Activated CD4-positive, alpha-beta memory T cell treated with anti-CD3 and anti-CD28 coated beads for 36 hours (primary cell): ENCODE measurements at regions of chr3 and their contacts with region 1.

Region 1: GRCh38 chr3:141875374-141875892 is 1.0 kb upstream of the ATP1B3 start:
- DNase-seq: peak; percentile 91
- H3K4me3 Mint-ChIP-seq: peak overlapping the region; percentile 88
- H3K27ac Mint-ChIP-seq: peak overlapping the region; percentile 92
- H3K4me1 Mint-ChIP-seq: peaks cover 32% of the 10 kb centered on the region
- H3K27me3 Mint-ChIP-seq: no peaks in the 10 kb centered on the region

Region 2: GRCh38 chr3:141303481-141304223 is 571.8 kb before region 1 on chr3:
- CTCF ChIA-PET with region 1: no interaction called
- POLR2A ChIA-PET with region 1: no interaction called
- intact Hi-C with region 1: loop called (anchors 10 kb)
- DNase-seq: peak; percentile 56
- H3K4me3 Mint-ChIP-seq: no peak overlapping the region
- H3K27ac Mint-ChIP-seq: no peak overlapping the region
- H3K4me1 Mint-ChIP-seq: peaks cover 44% of the 10 kb centered on the region
- H3K27me3 Mint-ChIP-seq: no peaks in the 10 kb centered on the region

Region 3: GRCh38 chr3:141597931-141598330 is 277.5 kb before region 1 on chr3:
- CTCF ChIA-PET with region 1: no interaction called
- POLR2A ChIA-PET with region 1: no interaction called
- intact Hi-C with region 1: no loop called
- DNase-seq: no peak
- H3K4me3 Mint-ChIP-seq: no peak overlapping the region
- H3K27ac Mint-ChIP-seq: no peak overlapping the region
- H3K4me1 Mint-ChIP-seq: peaks cover 3% of the 10 kb centered on the region
- H3K27me3 Mint-ChIP-seq: no peaks in the 10 kb centered on the region

Region 4: GRCh38 chr3:141796081-141796888 is 79.1 kb before region 1 on chr3:
- CTCF ChIA-PET with region 1: interaction called, 38 read pairs
- POLR2A ChIA-PET with region 1: interaction called, 23 read pairs
- intact Hi-C with region 1: loop called (anchors 1 kb)
- DNase-seq: peak; percentile 88
- H3K4me3 Mint-ChIP-seq: peak overlapping the region; percentile 84
- H3K27ac Mint-ChIP-seq: peak overlapping the region; percentile 94
- H3K4me1 Mint-ChIP-seq: peaks cover 48% of the 10 kb centered on the region
- H3K27me3 Mint-ChIP-seq: no peaks in the 10 kb centered on the region

Region 5: GRCh38 chr3:141887051-141887450 is 11.6 kb after region 1 on chr3:
- CTCF ChIA-PET with region 1: interaction called, 7 read pairs
- POLR2A ChIA-PET with region 1: interaction called, 6 read pairs
- intact Hi-C with region 1: loop called (anchors 1 kb)
- DNase-seq: no peak
- H3K4me3 Mint-ChIP-seq: no peak overlapping the region
- H3K27ac Mint-ChIP-seq: no peak overlapping the region
- H3K4me1 Mint-ChIP-seq: peaks cover 64% of the 10 kb centered on the region
- H3K27me3 Mint-ChIP-seq: no peaks in the 10 kb centered on the region

Region 6: GRCh38 chr3:141913150-141913811 is 37.8 kb after region 1 on chr3:
- CTCF ChIA-PET with region 1: interaction called, 49 read pairs
- POLR2A ChIA-PET with region 1: interaction called, 8 read pairs
- intact Hi-C with region 1: loop called (anchors 1 kb)
- DNase-seq: peak; percentile 63
- H3K4me3 Mint-ChIP-seq: no peak overlapping the region
- H3K27ac Mint-ChIP-seq: no peak overlapping the region
- H3K4me1 Mint-ChIP-seq: peaks cover 5% of the 10 kb centered on the region
- H3K27me3 Mint-ChIP-seq: no peaks in the 10 kb centered on the region